Activated naive CD8-positive, alpha-beta T cell treated with anti-CD3 and anti-CD28 coated beads, Interleukin-2, amount 10 ng/mL, durations not matched to agents 7 days and 5 days (primary cell): ENCODE measurements at regions of chr1 and their contacts with region 1.

Region 1: DNA sequence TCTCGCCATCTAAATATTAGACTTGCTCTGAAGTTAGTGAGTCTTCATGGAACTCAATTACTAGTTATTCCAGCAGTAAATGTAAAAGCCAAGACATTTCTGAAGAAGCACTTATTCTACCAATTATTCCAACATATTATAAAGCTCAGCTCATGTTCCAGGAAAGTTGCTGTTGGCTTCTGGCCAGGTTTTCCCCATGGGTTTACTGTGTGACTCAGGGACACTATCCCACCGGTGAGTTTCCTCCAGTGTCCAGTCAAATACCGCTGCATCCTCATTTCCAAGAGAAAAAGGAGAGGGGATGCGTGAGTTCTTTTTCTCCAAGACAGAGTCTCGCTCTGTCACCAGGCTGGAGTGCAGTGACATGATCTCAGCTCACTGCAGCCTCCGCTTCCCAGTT is 9.2 kb upstream of the HHIPL2 start:
- DNase-seq: no peak
- ATAC-seq: no peak
- H3K4me3 Mint-ChIP-seq: no peak overlapping the region
- H3K27ac Mint-ChIP-seq: no peak overlapping the region
- H3K4me1 Mint-ChIP-seq: no peaks in the 10 kb centered on the region
- H3K27me3 Mint-ChIP-seq: no peaks in the 10 kb centered on the region

Region 2: DNA sequence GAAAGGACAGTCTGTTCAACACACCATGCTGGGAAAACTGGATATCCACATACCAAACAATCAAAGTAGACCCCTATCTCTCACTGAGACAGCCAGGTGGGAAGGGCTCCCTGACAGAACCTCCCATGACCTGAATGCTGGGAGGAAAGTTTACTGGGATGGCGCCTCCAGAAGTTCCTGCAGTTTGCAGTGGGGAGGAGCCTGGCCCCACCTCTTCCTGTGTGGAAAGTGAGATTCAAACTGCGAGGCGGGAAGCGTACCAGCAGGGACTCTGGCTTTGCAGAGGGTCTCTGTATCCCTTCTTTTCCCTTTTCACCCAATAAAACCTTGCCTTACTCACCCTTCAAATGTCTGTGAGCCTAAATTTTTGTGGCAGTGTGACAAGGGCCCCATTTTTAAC is 199.9 kb before region 1 on chr1:
- POLR2A ChIA-PET with region 1: no interaction called
- DNase-seq: no peak
- ATAC-seq: no peak
- H3K4me3 Mint-ChIP-seq: no peak overlapping the region
- H3K27ac Mint-ChIP-seq: no peak overlapping the region
- H3K4me1 Mint-ChIP-seq: no peaks in the 10 kb centered on the region
- H3K27me3 Mint-ChIP-seq: no peaks in the 10 kb centered on the region

Region 3: DNA sequence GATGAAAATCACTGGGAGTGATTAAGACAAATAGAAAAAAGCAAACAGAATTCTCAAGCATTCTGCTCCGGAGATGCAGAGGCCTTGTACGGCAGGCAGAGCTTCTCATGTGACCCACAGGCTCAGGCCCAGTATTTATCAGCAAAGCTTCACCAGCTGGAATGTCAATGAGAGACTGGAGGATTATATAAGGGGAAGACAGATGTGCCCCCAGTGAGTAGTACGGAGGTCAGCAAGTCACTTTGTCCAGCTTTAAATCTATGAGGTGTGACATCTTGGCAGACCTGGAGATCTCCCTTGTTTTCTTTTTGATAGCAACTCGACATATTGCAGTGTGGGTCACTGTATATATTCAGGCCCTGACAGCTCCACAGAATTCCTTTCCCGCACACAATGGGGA is 116.1 kb before region 1 on chr1:
- POLR2A ChIA-PET with region 1: no interaction called
- DNase-seq: no peak
- ATAC-seq: no peak
- H3K4me3 Mint-ChIP-seq: no peak overlapping the region
- H3K27ac Mint-ChIP-seq: no peak overlapping the region
- H3K4me1 Mint-ChIP-seq: no peaks in the 10 kb centered on the region
- H3K27me3 Mint-ChIP-seq: no peaks in the 10 kb centered on the region

Region 4: DNA sequence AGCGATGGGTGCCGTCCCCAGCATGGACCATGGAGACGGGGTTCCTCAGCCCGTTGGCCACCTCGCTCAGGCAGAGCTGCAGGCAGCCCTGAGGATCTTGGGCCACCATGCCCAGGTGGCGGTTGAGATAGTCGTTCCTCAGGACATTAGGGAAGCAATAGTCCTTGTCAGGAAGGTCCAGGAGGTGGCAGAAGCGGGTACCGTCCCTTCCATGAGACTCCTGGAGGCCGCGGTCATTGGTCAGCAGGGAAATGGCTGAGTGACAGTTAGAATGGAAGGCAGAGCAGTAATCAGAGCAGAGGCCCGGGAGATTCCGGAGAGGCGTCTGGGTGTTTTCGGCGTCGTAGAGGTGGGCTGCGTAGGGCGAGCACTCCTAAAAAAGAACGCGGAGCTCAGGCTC is 13.3 kb before region 1 on chr1:
- POLR2A ChIA-PET with region 1: interaction called, 10 read pairs
- DNase-seq: no peak
- ATAC-seq: no peak
- H3K4me3 Mint-ChIP-seq: no peak overlapping the region
- H3K27ac Mint-ChIP-seq: no peak overlapping the region
- H3K4me1 Mint-ChIP-seq: no peaks in the 10 kb centered on the region
- H3K27me3 Mint-ChIP-seq: peaks cover 15% of the 10 kb centered on the region

Region 5: GRCh38 chr1:222589462-222590302 is 32.5 kb after region 1 on chr1 and contains the start of gene TAF1A:
- POLR2A ChIA-PET with region 1: no interaction called
- DNase-seq: peak; percentile 81
- ATAC-seq: peak; percentile 99
- H3K4me3 Mint-ChIP-seq: peak within 1 kb of the TSS; percentile 97
- H3K27ac Mint-ChIP-seq: peak within 1 kb of the TSS; percentile 94
- H3K4me1 Mint-ChIP-seq: peaks cover 25% of the 10 kb centered on the region
- H3K27me3 Mint-ChIP-seq: no peaks in the 10 kb centered on the region
- total RNA-seq, gene TAF1A: 12.1 to 14.4 TPM